ENCODE measurements at regions of chr1 and their contacts with region 1.

Region 1: DNA sequence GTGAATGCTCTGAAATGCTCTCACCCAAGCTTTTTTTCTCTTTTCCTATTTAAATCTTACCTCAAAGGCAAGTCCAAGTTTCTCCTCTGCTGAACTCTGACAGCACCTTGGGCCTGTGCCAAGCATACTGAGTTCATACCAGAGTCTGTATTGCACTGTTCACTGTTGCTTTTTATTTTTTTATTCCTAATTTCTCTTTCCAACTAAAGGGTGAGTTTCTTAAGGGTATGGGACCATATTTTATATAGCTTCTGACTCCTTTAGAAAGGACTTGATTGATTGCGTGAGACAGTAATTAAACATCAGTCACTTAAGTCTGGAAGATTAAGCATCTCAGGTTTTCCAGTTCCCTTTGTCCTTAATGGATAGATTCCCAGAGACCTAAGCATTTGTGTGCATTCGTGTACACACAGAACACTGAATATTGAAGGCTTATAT is 69.9 kb downstream of the CACHD1 start:
- DNase-seq: peak; percentile 85 to 86
- ATAC-seq: no peak
- H3K4me3 ChIP-seq: no peak overlapping the region
- H3K27ac ChIP-seq: no peak overlapping the region
- H3K4me1 ChIP-seq: peaks cover 0 to 5% of the 10 kb centered on the region in 2 donors
- H3K27me3 ChIP-seq: no peaks in the 10 kb centered on the region

Region 2: GRCh38 chr1:64469977-64470664 is 69.7 kb before region 1 on chr1 and contains the start of gene CACHD1:
- intact Hi-C with region 1: loop called in 1 of 2 experiments (anchors 10 kb)
- DNase-seq: peak; percentile 85 to 92
- ATAC-seq: peak; percentile 90
- H3K4me3 ChIP-seq: peak within 1 kb of the TSS; percentile 85 to 87
- H3K27ac ChIP-seq: peak within 1 kb of the TSS; percentile 1 to 50
- H3K4me1 ChIP-seq: no peaks in the 10 kb centered on the region
- H3K27me3 ChIP-seq: no peaks in the 10 kb centered on the region
- total RNA-seq, gene CACHD1: 7.7 to 26.5 TPM

Region 3: GRCh38 chr1:64675718-64676345 is 136.0 kb after region 1 on chr1:
- intact Hi-C with region 1: no loop called
- DNase-seq: no peak
- ATAC-seq: no peak
- H3K4me3 ChIP-seq: no peak overlapping the region
- H3K27ac ChIP-seq: no peak overlapping the region
- H3K4me1 ChIP-seq: peaks cover 0 to 2% of the 10 kb centered on the region in 2 donors
- H3K27me3 ChIP-seq: no peaks in the 10 kb centered on the region